AG04449 (cell line): ENCODE measurements at regions of chr2 and their contacts with region 1.

Region 1: DNA sequence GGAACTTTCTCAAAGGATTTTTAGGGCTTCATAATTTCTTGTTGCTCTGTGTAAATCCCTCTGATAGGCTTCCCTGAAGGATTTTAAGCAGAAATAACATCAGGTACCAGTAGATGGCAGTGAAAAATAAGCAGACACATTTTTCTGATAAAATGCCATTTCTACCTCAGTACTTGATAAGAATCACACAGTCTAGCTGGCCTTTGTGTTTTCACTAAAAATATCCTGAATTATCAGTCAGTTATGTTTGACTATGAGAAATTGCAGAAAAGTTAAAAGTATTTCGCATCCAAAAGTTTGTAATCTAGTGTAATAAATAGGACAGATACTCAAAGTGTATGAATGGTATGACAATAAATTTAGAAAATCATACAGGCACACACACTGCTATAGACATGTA is 68.7 kb downstream of the DNAJC10 start:
- DNase-seq: no peak
- H3K4me3 ChIP-seq: no peak overlapping the region
- CTCF ChIP-seq: peak; percentile 34

Region 2: DNA sequence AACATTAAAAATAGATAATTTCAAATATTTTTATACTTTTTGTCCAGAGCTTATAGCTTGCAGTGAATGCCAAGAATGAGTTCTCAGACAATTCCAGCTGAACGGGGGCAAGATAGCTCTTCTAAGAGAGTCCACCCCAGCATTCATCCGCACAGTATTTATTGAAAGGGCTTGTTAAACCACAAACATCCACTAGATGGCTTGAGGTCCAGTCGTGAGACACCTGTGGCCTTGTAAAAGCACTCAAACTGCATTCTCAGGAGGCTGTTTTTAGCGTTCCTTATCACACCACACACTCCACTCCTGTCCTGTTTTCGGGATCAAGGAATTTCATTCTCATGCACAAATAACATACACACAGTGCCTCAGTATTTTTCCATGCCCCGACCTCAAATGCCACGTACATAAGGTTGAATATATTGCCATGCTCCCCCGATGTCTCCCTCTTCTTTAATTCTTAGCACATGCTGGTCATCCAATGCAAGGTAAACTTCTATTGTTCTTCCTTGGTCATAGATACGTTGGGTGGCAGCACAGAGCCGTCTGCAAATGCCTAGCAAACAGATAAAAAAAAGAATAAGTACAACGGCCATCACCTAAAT is 21.4 kb before region 1 on chr2:
- CTCF ChIA-PET with region 1: interaction called, 25 read pairs
- POLR2A ChIA-PET with region 1: no interaction called
- DNase-seq: no peak
- H3K4me3 ChIP-seq: no peak overlapping the region
- CTCF ChIP-seq: peak; percentile 47

Region 3: GRCh38 chr2:182807319-182807718 is 22.5 kb after region 1 on chr2:
- CTCF ChIA-PET with region 1: interaction called, 13 read pairs
- POLR2A ChIA-PET with region 1: no interaction called
- DNase-seq: no peak
- H3K4me3 ChIP-seq: no peak overlapping the region
- CTCF ChIP-seq: no peak